ENCODE measurements at regions of chr11 and their contacts with region 1.

Region 1: DNA sequence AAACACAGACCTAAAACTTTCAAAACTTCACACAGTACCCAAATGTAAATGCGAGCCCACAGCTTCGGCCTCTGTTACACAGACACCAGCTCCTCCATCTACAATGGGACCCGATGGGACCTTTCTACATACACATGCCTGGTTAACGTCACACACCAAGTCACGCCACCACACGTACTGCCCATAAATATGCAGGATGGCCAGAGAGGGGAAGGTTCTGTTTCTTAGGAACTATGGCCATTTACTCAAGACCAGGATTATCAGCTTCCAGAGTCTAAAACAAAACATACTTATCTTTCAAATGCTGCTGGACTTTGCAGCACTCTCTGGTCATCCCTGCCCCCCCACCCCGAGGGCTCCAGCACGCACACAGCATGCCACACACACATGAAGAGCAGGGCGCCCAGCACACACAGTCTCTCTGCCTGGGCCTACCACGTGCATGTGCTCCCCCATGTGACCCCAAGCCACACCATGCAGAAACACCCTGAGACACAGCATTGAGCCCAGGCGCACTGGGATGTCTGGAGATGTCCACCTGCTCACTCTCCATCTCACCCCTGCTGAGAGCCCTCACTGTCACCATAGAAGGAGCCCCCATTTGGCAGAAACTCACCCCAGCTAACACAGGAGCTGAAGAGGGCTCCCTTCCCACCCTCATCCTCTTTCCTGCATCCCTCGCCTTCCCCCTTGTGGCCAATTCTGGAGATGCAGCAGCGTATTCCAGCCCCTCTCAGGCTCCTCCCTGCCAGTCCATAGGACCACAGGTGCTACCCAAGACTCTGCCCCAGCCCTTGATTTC is 61.8 kb downstream of the SLC22A12 start:
- DNase-seq: peak; percentile 39 to 59
- ATAC-seq: peak; percentile 51 to 90
- H3K4me3 ChIP-seq: no peak overlapping the region
- H3K27ac ChIP-seq: no peak overlapping the region
- H3K4me1 ChIP-seq: peaks cover 0 to 3% of the 10 kb centered on the region in 2 donors
- H3K27me3 ChIP-seq: no peaks in the 10 kb centered on the region
- CTCF ChIP-seq: peak; percentile 62 to 88 (median 84)
- POLR2A ChIP-seq: no peak

Region 2: GRCh38 chr11:64448599-64449556 is 203.9 kb before region 1 on chr11:
- in situ Hi-C with region 1: no loop called
- intact Hi-C with region 1: loop called (anchors 1 kb)
- DNase-seq: peak; percentile 68 to 76
- ATAC-seq: peak; percentile 84 to 88
- H3K4me3 ChIP-seq: peak overlapping the region; percentile 34 to 59 (median 42)
- H3K27ac ChIP-seq: peak overlapping the region; percentile 16 to 46 (median 42)
- H3K4me1 ChIP-seq: peaks cover 13 to 14% of the 10 kb centered on the region in 2 donors
- H3K27me3 ChIP-seq: no peaks in the 10 kb centered on the region
- CTCF ChIP-seq: peak; percentile 64 to 88 (median 80)
- POLR2A ChIP-seq: no peak

Region 3: GRCh38 chr11:64553551-64554201 is 99.1 kb before region 1 on chr11:
- in situ Hi-C with region 1: no loop called
- intact Hi-C with region 1: loop called (anchors 1 kb)
- DNase-seq: peak in 1 of 2 donors; percentile 40
- ATAC-seq: peak; percentile 53 to 69
- H3K4me3 ChIP-seq: no peak overlapping the region
- H3K27ac ChIP-seq: peak overlapping the region in 1 of 4 donors; percentile 31
- H3K4me1 ChIP-seq: peaks cover 8 to 11% of the 10 kb centered on the region in 2 donors
- H3K27me3 ChIP-seq: peaks cover 0 to 2% (median 0%) of the 10 kb centered on the region in 3 donors
- CTCF ChIP-seq: peak; percentile 86 to 98 (median 95)
- POLR2A ChIP-seq: no peak

Measured in gastrocnemius medialis (tissue), 4 donors.